ENCODE measurements at regions of chr22 and their contacts with region 1.

Region 1: GRCh38 chr22:20238536-20238900 is 29.6 kb downstream of the RTN4R start:
- DNase-seq: peak; percentile 89

Region 2: DNA sequence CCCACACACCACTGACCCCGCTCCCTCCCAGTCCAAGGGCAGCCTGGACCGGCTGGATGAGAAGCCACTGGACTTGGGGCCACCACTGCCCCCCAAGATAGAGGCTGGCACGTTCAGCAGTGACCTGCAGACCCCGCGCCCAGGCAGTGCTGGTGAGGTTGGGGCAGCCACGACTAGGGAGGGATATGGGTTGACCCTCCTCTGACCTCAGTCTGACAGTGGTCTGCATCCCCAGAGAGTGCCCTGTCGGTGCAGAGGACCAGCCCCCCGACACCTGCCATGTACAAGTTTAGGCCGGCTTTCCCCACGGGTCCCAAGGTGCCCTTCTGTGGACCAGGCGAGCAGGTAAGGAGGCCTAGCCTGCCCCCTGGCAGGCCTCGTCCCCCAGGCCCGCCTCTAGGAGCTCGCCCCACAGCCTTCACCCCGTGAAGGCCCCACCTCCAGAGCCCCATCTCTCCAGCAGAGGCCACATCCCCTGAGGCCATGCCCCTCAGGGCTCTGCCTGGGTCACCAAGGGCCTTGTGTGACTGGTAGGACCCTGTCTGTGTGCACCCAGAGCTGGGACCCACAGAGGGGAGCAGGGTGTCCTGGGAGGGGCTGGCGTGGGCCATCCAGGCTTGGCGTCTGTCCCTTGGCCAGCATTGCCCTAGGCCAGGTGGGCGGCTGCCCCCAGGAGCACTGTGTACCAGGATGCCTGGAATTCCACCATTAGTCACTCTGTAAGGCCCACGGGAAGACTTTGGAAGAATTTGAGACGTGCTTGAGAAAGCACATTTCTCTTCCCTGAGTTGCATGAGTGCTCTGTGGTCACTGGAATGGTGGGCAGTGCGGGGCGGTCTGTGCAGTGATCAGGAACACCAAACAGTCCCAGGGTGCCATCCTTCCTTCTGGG is 97.1 kb before region 1 on chr22:
- CTCF ChIA-PET with region 1: no interaction called
- POLR2A ChIA-PET with region 1: no interaction called
- DNase-seq: no peak

Region 3: GRCh38 chr22:20156611-20157429 is 81.7 kb before region 1 on chr22:
- CTCF ChIA-PET with region 1: interaction called, 27 read pairs
- POLR2A ChIA-PET with region 1: interaction called, 7 read pairs
- DNase-seq: peak; percentile 94

Region 4: GRCh38 chr22:20186183-20186870 is 52.2 kb before region 1 on chr22:
- CTCF ChIA-PET with region 1: interaction called, 13 read pairs
- POLR2A ChIA-PET with region 1: no interaction called
- DNase-seq: peak; percentile 56

Region 5: GRCh38 chr22:20223421-20224255 is 14.9 kb before region 1 on chr22:
- CTCF ChIA-PET with region 1: interaction called, 10 read pairs
- POLR2A ChIA-PET with region 1: no interaction called
- DNase-seq: no peak

Region 6: DNA sequence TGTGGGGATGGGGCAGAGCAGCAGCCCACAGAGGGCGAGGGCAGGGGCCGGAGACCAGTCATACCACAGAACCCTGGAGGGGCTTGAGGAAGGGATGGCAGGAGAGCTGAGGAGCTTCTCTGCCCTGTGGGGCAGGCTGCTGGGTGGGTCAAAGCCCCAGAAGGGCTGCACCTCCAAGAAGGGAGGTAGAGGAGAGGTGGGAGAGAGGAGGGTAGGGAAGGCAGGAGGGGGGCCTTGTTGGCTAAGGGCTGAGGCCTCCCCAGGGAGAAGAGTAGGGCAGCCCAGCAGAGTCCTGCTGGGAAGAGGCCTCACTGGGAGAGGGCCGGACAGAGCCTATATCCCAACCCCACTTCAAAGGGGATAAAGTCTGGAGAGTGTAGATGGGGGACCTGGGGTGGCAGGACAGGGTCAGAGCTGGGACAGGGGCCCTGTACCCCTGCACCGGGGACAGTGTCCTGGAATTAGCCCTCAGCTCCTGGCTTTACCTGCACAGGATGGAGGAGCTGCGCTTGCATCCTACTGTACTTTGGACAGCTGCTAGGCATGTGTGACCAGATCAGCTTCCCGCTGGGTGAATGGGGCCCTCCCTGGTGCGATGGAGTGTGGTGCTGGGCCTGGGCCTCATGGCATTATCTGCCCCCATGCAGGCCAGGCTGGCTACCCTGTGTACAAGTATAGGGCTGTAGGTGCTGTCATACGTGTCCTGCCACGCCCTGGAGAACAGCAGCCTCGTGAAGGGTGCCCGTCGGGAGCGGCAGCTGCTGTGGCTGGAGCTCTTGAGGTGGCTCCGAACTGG is 74.1 kb after region 1 on chr22:
- CTCF ChIA-PET with region 1: no interaction called
- POLR2A ChIA-PET with region 1: no interaction called
- DNase-seq: no peak